Stomach (tissue), 19 donors: ENCODE measurements at regions of chr17 and their contacts with region 1.

Region 1: DNA sequence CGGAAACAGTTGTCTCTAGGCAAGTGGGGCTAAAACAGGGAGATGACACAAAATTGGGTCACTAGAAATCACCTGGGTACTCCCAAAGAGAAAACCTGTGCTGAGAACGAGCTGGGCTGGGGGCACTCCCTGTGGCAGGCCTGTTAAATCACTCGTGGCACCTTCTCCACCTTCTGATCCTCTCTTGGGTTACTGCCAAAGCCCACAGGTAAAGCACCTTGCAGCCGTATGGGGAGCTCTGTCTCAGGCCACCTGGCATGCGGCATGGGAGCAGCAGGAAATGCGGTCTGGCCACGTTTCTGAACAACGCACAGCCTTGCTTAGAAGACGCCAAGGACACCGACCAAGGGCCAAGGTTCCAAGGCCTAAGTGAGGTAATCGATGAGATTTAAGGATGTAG is 21.5 kb upstream of the ICAM2 start:
- DNase-seq: no peak
- H3K4me3 ChIP-seq: no peak overlapping the region
- H3K27ac ChIP-seq: no peak overlapping the region
- H3K4me1 ChIP-seq: peaks cover 0 to 18% (median 8%) of the 10 kb centered on the region in 4 donors
- H3K27me3 ChIP-seq: no peaks in the 10 kb centered on the region
- CTCF ChIP-seq: no peak
- EP300 ChIP-seq: no peak
- POLR2A ChIP-seq: no peak

Region 2: DNA sequence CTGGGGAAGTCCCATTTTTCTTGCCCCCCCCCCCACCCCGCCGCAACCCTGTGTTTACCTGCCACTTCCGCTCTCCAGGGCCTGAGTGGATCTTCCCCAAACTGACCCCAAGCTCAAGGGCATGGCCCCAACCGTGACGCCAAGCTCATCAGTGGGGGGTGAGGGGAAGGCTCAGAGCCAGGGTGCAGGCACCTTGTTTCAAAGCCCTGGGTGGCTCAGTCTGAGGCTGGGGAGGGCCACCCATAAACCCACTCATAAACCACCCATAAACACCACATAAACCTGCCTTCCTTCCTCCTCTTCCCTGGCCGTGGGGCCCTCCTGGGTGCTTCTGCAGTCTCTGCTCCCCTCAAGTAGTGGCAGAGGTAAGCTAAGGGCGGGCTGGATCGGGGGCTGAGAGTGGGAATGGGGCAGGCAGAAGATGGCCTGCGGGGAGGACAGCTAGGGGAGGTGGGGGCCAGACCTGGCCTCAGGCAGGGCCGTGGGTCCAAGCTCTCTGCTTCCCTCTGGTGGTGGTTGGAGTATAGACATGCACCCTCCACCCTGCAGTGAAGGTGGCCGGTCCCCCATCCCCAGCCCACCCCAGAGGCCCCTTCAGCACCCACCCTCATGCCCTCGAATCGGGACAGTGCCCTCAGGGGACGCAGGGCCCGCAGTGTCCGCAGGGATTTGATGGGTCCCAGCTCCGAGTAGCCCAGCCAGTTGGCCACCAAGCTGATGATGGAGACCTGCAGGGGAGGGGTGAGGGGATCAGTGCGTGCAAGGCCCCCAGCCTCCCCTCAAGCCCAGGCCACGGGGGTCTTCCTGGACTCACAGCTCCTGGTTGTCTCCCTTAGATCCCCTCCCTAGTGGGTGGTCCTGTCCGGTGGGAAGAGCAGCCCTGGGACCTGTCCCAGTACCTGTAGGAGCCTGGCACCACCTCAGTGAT is 95.2 kb before region 1 on chr17:
- intact Hi-C with region 1: no loop called
- DNase-seq: peak; percentile 51 to 76
- H3K4me3 ChIP-seq: no peak overlapping the region
- H3K27ac ChIP-seq: no peak overlapping the region
- H3K4me1 ChIP-seq: peaks cover 0 to 16% (median 6%) of the 10 kb centered on the region in 4 donors
- H3K27me3 ChIP-seq: peaks cover 0 to 36% (median 0%) of the 10 kb centered on the region in 3 donors
- CTCF ChIP-seq: peak in 5 of 7 experiments; percentile 13 to 70 (median 42)
- EP300 ChIP-seq: no peak
- POLR2A ChIP-seq: no peak

Region 3: DNA sequence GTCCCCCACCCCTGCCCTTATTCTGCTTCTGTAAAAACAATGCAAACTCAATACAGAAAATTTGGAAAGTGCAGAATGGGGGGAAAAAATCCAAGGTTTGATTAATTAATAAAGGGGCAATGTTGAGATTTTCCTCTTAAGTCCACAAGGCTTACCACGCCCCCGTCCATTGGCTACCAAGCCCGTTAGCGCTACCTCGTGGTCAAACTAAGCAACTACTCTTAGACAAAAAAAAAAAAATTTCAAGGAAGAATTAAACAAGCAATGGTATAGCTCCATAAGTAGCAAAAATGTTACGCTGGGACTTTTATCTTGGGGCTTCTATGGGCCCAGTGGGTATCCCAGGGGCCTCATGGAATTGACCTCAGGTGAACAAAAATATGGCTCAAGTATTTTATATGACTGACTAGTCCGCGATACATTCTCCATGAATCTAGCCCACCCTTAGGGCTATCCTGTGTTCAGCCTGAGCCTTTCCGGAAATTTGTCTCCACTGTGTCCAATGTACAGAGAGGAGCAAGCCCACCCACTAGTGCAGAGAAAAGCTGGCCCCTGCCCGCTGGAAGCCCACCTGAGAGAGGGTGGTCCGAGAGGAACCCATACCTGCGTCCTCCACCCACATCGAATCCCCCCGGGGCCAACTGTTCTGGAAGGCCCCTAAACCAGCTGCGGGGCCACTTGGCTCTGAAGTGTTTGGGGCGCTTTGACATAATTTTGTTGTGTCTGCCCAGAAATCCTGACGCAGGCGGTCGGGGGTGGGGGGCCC is 240.2 kb after region 1 on chr17:
- intact Hi-C with region 1: loop called (anchors 10 kb)
- DNase-seq: peak; percentile 68 to 92
- H3K4me3 ChIP-seq: no peak overlapping the region
- H3K27ac ChIP-seq: no peak overlapping the region
- H3K4me1 ChIP-seq: peaks cover 5 to 30% (median 8%) of the 10 kb centered on the region in 4 donors
- H3K27me3 ChIP-seq: no peaks in the 10 kb centered on the region
- CTCF ChIP-seq: peak in 5 of 7 experiments; percentile 50 to 79 (median 72)
- EP300 ChIP-seq: no peak
- POLR2A ChIP-seq: no peak